WTC11 (cell line): ENCODE measurements at regions of chr11 and their contacts with region 1.

Region 1: DNA sequence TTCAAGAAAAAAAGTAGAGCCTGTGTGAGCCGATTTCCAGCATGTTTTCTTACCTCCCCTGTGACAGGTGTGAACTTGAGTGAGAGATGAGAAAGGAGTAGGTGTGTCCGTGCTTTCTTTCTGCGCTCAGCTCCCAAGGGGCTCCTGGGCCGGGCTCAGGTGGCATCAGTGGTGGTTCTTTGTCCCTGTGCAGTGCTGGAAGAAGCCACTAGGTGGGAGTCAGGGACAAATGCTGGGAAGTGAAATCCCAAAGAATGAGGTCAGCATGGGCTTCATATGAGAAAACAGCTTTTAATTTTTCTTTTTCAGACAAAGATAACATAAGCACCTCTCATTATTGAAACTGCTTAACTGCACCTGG is 57.8 kb downstream of the PPFIBP2 start:
- DNase-seq: peak; percentile 86
- ATAC-seq: peak; percentile 84
- H3K4me3 Mint-ChIP-seq: no peak overlapping the region
- H3K27ac Mint-ChIP-seq: peak overlapping the region; percentile 58; the same call in 1 of the 2 replicates
- H3K4me1 Mint-ChIP-seq: peaks cover 64% of the 10 kb centered on the region
- H3K27me3 Mint-ChIP-seq: no peaks in the 10 kb centered on the region
- CTCF ChIP-seq: peak; percentile 74; the same call in 1 of the 2 replicates

Region 2: DNA sequence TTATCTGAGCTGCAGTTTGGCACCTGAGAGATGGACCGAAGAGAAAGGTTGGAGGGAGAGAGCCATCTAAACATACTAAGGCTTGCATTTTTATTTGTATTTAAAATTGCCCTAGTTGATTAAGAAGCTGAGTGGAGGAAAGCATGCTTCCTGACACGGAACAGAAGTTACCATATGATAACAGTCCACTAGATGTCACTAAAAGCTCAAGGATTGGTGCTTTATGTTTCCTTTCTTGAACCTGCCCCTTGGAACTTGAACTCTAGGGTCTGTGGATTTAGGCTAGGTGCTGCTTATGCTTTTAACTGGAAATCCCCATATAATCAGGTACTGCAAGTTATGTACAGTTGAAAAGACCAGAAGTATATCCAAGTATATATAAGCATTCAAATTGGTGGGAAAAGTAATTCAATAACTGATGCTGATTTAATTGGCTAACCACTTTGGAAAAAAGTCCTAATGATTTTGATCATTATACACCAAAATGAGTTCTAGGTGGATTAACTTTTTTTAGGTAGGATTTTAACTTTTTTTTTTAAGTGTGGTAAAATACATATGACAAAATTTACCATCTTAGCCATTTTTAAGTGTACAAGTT is 473.3 kb before region 1 on chr11:
- CTCF ChIA-PET with region 1: interaction called, 18 read pairs
- POLR2A ChIA-PET with region 1: no interaction called
- DNase-seq: no peak
- ATAC-seq: peak; percentile 91
- H3K4me3 Mint-ChIP-seq: no peak overlapping the region
- H3K27ac Mint-ChIP-seq: no peak overlapping the region
- H3K4me1 Mint-ChIP-seq: no peaks in the 10 kb centered on the region
- H3K27me3 Mint-ChIP-seq: peaks cover 7% of the 10 kb centered on the region
- CTCF ChIP-seq: peak; percentile 43; the same call in 1 of the 2 replicates

Region 3: GRCh38 chr11:7559398-7560283 is 12.0 kb before region 1 on chr11:
- CTCF ChIA-PET with region 1: interaction called, 10 read pairs
- POLR2A ChIA-PET with region 1: no interaction called
- DNase-seq: no peak
- ATAC-seq: peak; percentile 45; the same call in 1 of the 2 replicates
- H3K4me3 Mint-ChIP-seq: no peak overlapping the region
- H3K27ac Mint-ChIP-seq: no peak overlapping the region
- H3K4me1 Mint-ChIP-seq: peaks cover 46% of the 10 kb centered on the region
- H3K27me3 Mint-ChIP-seq: no peaks in the 10 kb centered on the region
- CTCF ChIP-seq: no peak

Region 4: GRCh38 chr11:7621090-7621489 is 49.5 kb after region 1 on chr11:
- CTCF ChIA-PET with region 1: interaction called, 12 read pairs
- POLR2A ChIA-PET with region 1: interaction called, 3 read pairs
- DNase-seq: no peak
- ATAC-seq: peak; percentile 72
- H3K4me3 Mint-ChIP-seq: no peak overlapping the region; the same call in 1 of the 2 replicates
- H3K27ac Mint-ChIP-seq: peak overlapping the region; percentile 88; the same call in 1 of the 2 replicates
- H3K4me1 Mint-ChIP-seq: peaks cover 34% of the 10 kb centered on the region
- H3K27me3 Mint-ChIP-seq: no peaks in the 10 kb centered on the region
- CTCF ChIP-seq: no peak

Region 5: GRCh38 chr11:7657306-7658025 is 85.8 kb after region 1 on chr11:
- CTCF ChIA-PET with region 1: interaction called, 229 read pairs
- POLR2A ChIA-PET with region 1: interaction called, 7 read pairs
- DNase-seq: peak; percentile 72
- ATAC-seq: peak; percentile 98
- H3K4me3 Mint-ChIP-seq: no peak overlapping the region
- H3K27ac Mint-ChIP-seq: peak overlapping the region; percentile 69
- H3K4me1 Mint-ChIP-seq: peaks cover 6% of the 10 kb centered on the region
- H3K27me3 Mint-ChIP-seq: 0 out of 2 replicates have a peak, but pooled peaks cover under 1% of the 10 kb centered on the region
- CTCF ChIP-seq: peak; percentile 37

Region 6: DNA sequence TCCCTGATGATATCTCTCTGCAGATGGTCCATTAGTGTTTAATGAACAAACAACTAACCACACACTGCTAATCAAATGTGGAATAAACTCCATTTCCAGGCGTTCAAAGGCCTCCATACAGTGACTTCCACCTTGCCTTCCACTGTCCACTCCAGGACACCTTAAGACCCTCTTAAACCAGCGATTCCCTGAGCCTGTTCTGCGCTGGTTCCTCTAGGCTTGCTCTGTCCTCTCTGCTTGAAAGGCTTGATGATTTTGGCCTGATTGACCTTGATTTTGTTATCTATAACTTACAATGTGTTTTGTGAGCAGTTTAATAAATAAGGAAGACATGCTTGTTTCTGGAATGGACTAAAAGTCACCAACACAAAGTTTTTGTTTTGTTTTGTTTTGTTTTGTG is 122.6 kb after region 1 on chr11:
- CTCF ChIA-PET with region 1: interaction called, 13 read pairs
- POLR2A ChIA-PET with region 1: no interaction called
- DNase-seq: no peak
- ATAC-seq: no peak
- H3K4me3 Mint-ChIP-seq: no peak overlapping the region; the same call in 1 of the 2 replicates
- H3K27ac Mint-ChIP-seq: no peak overlapping the region
- H3K4me1 Mint-ChIP-seq: peaks cover 21% of the 10 kb centered on the region
- H3K27me3 Mint-ChIP-seq: peaks cover 9% of the 10 kb centered on the region
- CTCF ChIP-seq: no peak

Region 7: GRCh38 chr11:7793233-7793632 is 221.6 kb after region 1 on chr11:
- CTCF ChIA-PET with region 1: no interaction called
- POLR2A ChIA-PET with region 1: no interaction called
- DNase-seq: no peak
- ATAC-seq: no peak
- H3K4me3 Mint-ChIP-seq: no peak overlapping the region
- H3K27ac Mint-ChIP-seq: no peak overlapping the region
- H3K4me1 Mint-ChIP-seq: no peaks in the 10 kb centered on the region
- H3K27me3 Mint-ChIP-seq: peaks cover 5% of the 10 kb centered on the region; the same call in 1 of the 2 replicates
- CTCF ChIP-seq: no peak